ENCODE measurements at regions of chr14 and their contacts with region 1.

Region 1: GRCh38 chr14:21383848-21384493 is at the start of gene SUPT16H:
- DNase-seq: peak; percentile 89 to 98
- H3K4me3 ChIP-seq: peak within 1 kb of the TSS; percentile 63 to 79
- H3K27ac ChIP-seq: peak within 1 kb of the TSS; percentile 88 to 90
- H3K4me1 ChIP-seq: peaks cover 0 to 16% of the 10 kb centered on the region in 2 donors
- H3K27me3 ChIP-seq: no peaks in the 10 kb centered on the region
- CTCF ChIP-seq: no peak
- total RNA-seq, gene SUPT16H: 13.5 TPM

Region 2: DNA sequence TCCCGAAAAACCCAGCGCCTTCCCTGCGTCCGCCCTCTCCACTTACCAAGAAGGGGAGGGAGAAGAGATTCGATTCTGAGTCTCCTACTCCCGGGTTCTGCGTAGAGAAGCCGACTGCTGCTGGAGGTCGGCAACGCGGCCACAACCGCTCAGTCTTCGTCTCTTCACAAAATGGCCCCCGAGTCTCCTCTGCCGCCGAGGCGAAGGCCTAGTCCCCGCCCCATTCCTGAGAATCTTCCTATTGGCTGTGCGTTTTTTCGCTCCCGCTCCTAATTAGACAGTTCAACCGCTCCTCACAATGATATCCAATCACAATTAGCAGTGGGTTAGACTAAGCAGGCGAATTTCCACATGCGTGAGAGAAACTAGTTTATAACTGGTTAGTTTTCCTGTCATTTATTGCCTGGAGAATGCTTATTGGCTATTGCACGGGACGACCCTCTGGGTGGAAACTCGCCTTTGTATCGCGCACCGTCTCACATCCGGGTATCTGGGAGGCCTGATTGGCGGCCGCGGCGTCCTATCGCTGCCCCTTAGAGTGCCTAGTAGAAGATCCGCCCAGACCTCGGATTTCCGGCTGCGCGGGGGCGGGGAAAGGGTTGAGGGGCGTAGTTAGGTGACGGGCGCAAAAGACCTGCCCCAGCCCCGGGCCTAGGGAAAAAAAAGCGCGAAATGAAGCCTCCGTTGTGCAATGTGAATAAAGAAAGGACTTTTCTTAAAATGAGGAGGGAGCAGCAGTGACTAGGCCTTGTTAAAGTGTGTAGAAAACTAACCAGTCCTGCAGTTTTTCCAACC is 114.5 kb before region 1 on chr14 and contains the start of gene HNRNPC:
- intact Hi-C with region 1: loop called (anchors 1 kb)
- DNase-seq: peak; percentile 100
- H3K4me3 ChIP-seq: peak within 1 kb of the TSS; percentile 67 to 95
- H3K27ac ChIP-seq: peak within 1 kb of the TSS; percentile 96 to 98
- H3K4me1 ChIP-seq: peaks cover 13% of the 10 kb centered on the region in 2 donors
- H3K27me3 ChIP-seq: no peaks in the 10 kb centered on the region
- CTCF ChIP-seq: no peak
- total RNA-seq, gene HNRNPC: 303 TPM

Region 3: DNA sequence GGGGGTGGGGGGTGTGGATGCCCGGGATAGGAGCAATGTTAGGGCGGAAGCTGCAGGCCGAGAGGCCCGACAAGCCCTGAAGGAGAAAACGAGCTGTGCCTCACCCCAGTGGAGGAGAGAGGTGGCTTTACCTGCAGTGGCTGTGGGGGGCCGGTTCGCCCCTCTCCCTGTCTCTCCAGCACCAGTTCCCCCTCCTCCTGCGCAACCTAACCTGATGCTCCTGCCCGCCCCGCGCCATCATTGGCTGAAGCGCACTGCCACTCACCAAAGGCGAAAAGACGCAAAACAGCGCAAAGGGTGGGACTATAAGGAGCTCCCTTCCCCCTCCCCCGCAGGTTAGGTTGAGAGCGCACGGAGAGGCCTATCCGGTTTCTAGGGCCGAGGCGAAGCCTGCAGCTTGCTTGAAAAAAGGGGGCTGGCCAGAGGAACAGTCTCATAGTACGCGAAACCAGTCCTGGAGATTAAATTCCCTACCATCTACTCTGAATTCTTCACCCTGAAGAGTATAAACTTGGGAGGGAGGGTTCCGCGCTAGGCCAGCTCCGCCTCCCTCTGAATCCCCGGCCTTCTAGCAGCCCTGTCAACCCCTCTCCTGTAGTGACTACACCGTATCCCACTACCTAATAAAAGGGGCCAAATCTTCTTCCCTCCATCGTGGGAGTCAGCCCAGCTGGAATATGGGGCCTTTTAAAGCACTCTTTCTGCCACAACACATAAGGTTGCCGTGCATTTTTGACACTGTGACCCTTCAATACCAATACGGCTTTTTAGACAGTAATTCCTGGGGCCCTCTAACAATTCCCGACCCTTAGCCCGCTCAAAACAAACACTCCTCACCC is 53.3 kb after region 1 on chr14:
- intact Hi-C with region 1: loop called (anchors 1 kb)
- DNase-seq: peak; percentile 95 to 99
- H3K4me3 ChIP-seq: peak overlapping the region; percentile 73 to 89
- H3K27ac ChIP-seq: peak overlapping the region; percentile 86 to 89
- H3K4me1 ChIP-seq: peaks cover 8 to 15% of the 10 kb centered on the region in 2 donors
- H3K27me3 ChIP-seq: no peaks in the 10 kb centered on the region
- CTCF ChIP-seq: no peak